ENCODE measurements at regions of chr20 and their contacts with region 1.

Region 1: DNA sequence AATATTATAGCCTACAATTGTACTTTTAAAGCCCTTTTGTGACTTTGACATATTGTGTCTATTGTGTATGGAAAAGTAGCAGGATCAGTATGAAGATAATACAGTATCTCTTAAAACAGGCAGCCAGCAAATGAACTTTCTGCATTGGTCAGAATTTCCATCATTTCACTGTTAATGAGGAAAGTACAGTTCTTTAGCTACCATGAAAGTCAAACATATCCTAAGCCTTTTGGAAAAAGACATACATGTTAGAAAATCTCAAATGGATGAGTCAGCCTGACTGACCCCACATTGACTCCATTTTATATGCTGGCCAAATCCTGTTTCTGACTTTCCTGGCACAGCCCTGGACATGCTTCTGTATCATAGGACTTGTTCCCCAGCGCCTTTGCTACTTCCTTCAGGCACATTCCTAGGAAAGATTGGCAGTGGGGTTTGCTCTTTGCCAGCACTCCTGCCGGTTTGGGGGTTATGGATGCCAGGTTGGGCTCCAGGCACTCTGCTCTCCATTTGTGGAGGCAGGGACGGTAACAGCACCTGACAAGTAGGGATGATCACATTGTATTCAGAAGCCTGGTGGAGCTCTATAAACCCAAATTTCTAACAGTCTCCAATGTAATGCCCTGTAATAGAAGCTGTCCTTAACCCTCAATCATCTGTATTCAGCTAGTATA is 43.7 kb downstream of the TOP1 start:
- DNase-seq: peak in 2 of 5 donors; percentile 9 to 43
- ATAC-seq: peak in 3 of 4 donors; percentile 78 to 82 (median 79)
- H3K4me3 ChIP-seq: no peak overlapping the region
- H3K27ac ChIP-seq: peak overlapping the region in 5 of 12 donors; percentile 5 to 63 (median 45)
- H3K4me1 ChIP-seq: peaks cover 0 to 85% (median 43%) of the 10 kb centered on the region in 12 donors
- H3K27me3 ChIP-seq: no peaks in the 10 kb centered on the region
- CTCF ChIP-seq: no peak
- POLR2A ChIP-seq: no peak

Region 2: GRCh38 chr20:41028348-41029148 is 43.8 kb before region 1 on chr20 and contains the start of gene TOP1:
- intact Hi-C with region 1: loop called in 6 of 10 experiments (anchors 5 kb)
- DNase-seq: peak; percentile 100
- ATAC-seq: peak; percentile 98 to 99 (median 98)
- H3K4me3 ChIP-seq: peak within 1 kb of the TSS; percentile 66 to 99 (median 94)
- H3K27ac ChIP-seq: peak within 1 kb of the TSS; percentile 89 to 99 (median 94)
- H3K4me1 ChIP-seq: peaks cover 4 to 46% (median 38%) of the 10 kb centered on the region in 12 donors
- H3K27me3 ChIP-seq: no peaks in the 10 kb centered on the region
- CTCF ChIP-seq: peak in 1 of 12 donors; percentile 24
- POLR2A ChIP-seq: peak; percentile 94 to 99
- total RNA-seq, gene TOP1: 15.0 to 32.3 (median 21.8) TPM

Region 3: GRCh38 chr20:41038878-41039404 is 33.4 kb before region 1 on chr20:
- intact Hi-C with region 1: loop called in 4 of 10 experiments (anchors 5 kb)
- DNase-seq: no peak
- ATAC-seq: no peak
- H3K4me3 ChIP-seq: no peak overlapping the region
- H3K27ac ChIP-seq: no peak overlapping the region
- H3K4me1 ChIP-seq: peaks cover 5 to 70% (median 21%) of the 10 kb centered on the region in 12 donors
- H3K27me3 ChIP-seq: no peaks in the 10 kb centered on the region
- CTCF ChIP-seq: no peak
- POLR2A ChIP-seq: no peak